Astrocyte of the cerebellum (primary cell): ENCODE measurements at regions of chr17 and their contacts with region 1.

Region 1: GRCh38 chr17:17890773-17891759 is 54.3 kb upstream of the SREBF1 start:
- DNase-seq: peak; percentile 39
- H3K4me3 ChIP-seq: no peak overlapping the region
- CTCF ChIP-seq: peak; percentile 90

Region 2: DNA sequence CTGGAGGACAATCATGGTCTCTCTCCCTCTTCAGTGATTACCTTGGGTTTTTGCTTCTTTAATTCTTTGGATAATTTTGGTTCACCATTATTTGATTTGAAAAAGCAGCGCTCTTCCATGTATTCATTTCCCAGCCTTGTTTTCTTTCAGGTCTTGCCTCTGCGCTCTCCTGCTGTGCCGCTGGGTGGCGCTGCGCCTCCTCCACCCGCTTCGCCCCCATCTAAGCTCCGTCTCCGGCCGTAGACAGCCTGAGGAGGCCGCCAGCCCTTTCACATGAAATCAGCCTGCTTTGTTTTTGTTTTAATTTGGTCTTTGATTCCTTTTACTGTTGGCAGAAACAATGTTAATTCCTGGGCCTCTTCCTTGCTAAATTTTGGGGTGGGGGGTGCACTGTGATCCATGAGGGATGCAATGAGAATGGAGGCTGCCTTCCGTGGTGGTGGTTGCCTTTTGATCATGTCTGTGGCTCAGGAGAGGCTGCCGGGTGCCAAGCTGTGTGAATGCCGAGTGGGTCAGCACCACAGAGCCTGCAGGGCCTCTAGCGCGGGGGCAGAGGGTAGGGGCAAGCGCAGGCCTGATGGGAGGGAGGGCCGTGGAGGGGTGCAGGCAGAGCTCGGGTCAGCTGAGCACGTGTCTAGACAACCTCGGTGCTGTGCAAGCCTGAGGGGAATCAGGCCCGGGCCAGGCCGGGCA is 749.1 kb before region 1 on chr17:
- in situ Hi-C with region 1: loop called (anchors 10 kb)
- DNase-seq: no peak
- H3K4me3 ChIP-seq: no peak overlapping the region
- CTCF ChIP-seq: peak; percentile 99

Region 3: GRCh38 chr17:17792551-17793377 is 98.3 kb before region 1 on chr17:
- in situ Hi-C with region 1: no loop called
- DNase-seq: peak; percentile 45
- H3K4me3 ChIP-seq: no peak overlapping the region
- CTCF ChIP-seq: no peak

Region 4: GRCh38 chr17:18033442-18034099 is 142.5 kb after region 1 on chr17:
- in situ Hi-C with region 1: loop called (anchors 5 kb)
- DNase-seq: peak; percentile 85
- H3K4me3 ChIP-seq: no peak overlapping the region
- CTCF ChIP-seq: peak; percentile 58

Region 5: DNA sequence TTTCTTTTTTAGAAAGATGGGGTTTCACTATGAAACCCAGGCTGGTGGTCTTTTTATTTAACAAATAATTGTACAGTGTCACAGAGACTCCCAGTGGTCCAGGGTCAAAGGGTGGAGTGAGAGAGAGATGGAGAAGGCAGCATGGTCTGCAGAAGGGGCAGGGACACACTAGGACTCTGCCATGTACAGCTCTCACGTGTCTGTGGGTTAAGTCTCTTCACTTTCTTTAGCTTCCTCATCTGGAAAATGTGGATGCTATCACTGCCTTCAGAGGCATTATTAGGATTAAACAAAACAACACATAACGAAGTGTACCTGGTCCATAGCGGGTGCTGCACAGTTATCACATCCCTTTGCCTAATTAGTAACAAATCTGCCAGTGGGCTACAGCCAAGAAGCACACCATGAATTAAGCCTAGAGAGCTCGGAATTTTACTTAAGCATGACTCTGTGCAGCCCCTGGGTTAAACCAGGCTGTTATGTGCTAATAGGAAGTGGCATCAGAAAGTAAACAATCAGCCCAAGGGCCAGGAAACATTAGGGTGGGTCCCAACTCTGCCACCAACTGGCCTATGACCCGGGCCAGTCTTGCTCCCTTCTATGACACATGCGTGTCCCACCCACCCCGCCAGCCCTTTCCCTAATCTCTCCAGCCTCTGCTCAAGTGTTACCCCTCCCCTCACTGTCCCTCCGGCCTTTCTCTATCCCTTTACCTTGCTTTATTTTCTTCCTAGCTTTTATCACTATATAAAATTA is 409.8 kb after region 1 on chr17:
- in situ Hi-C with region 1: no loop called
- DNase-seq: no peak
- H3K4me3 ChIP-seq: no peak overlapping the region
- CTCF ChIP-seq: no peak